MCF 10A (cell line): ENCODE measurements at regions of chr1 and their contacts with region 1.

Region 1: DNA sequence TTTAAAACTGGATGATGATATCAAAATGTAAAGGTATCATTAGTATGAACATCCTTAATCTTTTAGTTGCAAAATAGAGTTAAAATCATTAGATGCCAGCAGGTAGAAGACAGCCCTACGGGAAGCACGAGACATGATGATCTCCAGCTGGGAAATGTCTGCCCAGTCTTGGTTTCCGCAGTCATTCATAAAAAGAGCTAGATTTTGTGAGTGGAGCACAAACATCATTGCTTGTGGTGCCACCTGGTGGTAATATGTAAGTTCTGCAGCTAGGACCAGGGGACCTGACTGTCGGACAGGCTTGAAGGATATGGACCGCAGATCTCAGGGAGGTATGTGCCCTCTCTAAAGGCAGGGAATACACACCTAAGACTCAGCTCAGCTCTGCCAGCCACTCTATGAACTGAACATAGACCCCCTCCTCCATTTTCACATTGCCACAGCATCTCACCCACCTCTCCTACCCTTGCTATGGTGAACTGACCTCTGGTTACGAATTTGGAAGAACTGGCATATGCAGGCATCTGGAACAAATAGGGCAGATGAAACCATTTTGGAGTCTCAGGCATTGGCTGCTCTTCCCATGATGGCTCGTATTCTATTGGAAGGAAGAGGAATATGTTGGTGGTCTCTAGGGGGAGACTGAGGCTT is 9.2 kb downstream of the FCMR start:
- DNase-seq: peak; percentile 96
- H3K4me3 Mint-ChIP-seq: no peak overlapping the region
- H3K27ac Mint-ChIP-seq: no peak overlapping the region
- H3K4me1 Mint-ChIP-seq: peaks cover 28% of the 10 kb centered on the region
- H3K27me3 Mint-ChIP-seq: peaks cover 43% of the 10 kb centered on the region
- CTCF ChIP-seq: peak; percentile 94

Region 2: DNA sequence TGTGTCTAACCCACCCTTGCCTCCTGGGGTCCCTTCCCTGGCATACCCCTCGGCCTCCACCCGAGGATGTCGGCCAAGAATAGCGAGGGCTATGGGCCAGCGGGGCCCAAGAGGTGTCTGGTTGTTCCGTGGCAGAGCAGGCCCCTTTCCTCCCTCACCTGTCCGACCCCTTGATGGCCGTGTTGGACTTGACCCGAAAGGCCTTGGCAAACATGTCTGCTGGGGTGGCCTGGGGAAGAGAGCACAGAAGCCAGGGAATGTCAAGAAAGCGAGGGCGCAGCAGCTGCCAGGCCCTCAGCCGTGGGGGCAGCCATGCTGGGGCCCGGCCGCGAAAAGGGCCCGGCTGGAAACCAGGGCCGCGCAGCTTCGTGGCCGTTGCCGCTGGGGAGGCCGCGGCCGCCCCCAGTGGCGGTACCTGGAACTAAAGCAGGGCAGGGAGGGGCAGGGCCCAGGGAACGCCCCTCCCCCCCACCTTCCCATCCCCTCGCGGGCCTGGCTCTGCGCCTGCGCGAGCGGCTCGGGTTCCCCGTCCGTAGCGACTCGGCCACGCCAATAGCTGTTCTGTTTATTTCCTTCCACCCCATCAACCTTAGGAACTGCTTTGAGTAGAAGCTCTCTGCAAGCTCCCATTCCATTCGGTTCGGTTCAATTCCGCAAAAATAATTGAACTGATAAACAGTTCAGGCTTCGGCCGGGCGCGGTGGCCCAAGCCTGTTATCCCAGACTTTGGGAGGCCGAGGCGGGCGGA is 300.3 kb before region 1 on chr1 and contains the start of gene EIF2D:
- CTCF ChIA-PET with region 1: interaction called, 53 read pairs
- POLR2A ChIA-PET with region 1: interaction called, 11 read pairs
- intact Hi-C with region 1: loop called (anchors 1 kb)
- DNase-seq: peak; percentile 99
- H3K4me3 Mint-ChIP-seq: peak within 1 kb of the TSS; percentile 88
- H3K27ac Mint-ChIP-seq: peak within 1 kb of the TSS; percentile 97
- H3K4me1 Mint-ChIP-seq: peaks cover 21% of the 10 kb centered on the region
- H3K27me3 Mint-ChIP-seq: no peaks in the 10 kb centered on the region
- CTCF ChIP-seq: peak; percentile 100
- total RNA-seq, gene EIF2D: 110 and 116 TPM in 2 replicates

Region 3: GRCh38 chr1:206734499-206735142 is 177.9 kb before region 1 on chr1:
- CTCF ChIA-PET with region 1: interaction called, 297 read pairs
- POLR2A ChIA-PET with region 1: interaction called, 9 read pairs
- intact Hi-C with region 1: loop called (anchors 1 kb)
- DNase-seq: peak; percentile 73
- H3K4me3 Mint-ChIP-seq: no peak overlapping the region
- H3K27ac Mint-ChIP-seq: peak overlapping the region; percentile 6
- H3K4me1 Mint-ChIP-seq: peaks cover 9% of the 10 kb centered on the region
- H3K27me3 Mint-ChIP-seq: no peaks in the 10 kb centered on the region
- CTCF ChIP-seq: peak; percentile 97

Region 4: DNA sequence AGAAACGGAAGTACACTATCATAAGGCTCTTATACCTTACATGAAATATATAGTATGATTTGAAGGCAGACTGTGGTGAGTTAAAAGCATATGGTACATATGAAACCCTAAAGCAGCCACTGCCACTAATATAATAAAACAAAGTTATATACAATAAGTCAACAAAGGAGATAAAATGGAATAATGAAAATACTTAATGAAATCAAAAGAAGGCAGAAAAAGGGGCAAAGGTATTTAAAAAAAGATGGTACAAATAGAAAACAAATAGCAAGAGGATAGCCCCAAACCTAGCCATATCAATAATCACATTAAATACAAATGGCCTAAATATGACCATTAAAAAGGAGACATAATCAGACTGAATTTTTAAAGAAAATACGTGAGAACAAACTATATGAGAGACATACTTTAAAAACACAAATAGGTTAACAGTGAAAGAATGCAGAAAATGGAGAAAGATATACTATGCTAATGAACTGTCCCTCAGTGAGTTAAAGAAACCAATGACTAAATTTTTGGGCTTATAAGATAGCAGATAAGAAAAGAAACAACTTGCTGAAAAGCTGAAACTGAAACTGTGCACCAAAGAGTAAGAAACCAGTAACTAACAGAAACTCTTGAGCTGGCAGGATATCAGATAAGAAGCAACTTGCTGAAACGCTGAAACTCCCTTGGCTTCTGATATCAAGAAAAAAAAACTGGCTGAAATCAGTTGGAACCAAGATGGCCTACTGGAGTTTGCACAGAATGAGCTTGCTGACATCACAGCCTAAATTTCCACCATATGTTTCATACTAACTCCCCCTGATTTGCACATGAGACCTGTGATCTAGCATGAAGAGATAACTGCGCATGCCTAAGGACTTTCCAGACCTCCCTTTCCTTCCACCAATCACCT is 95.9 kb before region 1 on chr1:
- CTCF ChIA-PET with region 1: interaction called, 243 read pairs
- POLR2A ChIA-PET with region 1: interaction called, 25 read pairs
- intact Hi-C with region 1: no loop called
- DNase-seq: no peak
- H3K4me3 Mint-ChIP-seq: no peak overlapping the region
- H3K27ac Mint-ChIP-seq: no peak overlapping the region
- H3K4me1 Mint-ChIP-seq: no peaks in the 10 kb centered on the region
- H3K27me3 Mint-ChIP-seq: no peaks in the 10 kb centered on the region
- CTCF ChIP-seq: no peak

Region 5: GRCh38 chr1:206890690-206891089 is 21.9 kb before region 1 on chr1:
- CTCF ChIA-PET with region 1: interaction called, 72 read pairs
- POLR2A ChIA-PET with region 1: interaction called, 271 read pairs
- intact Hi-C with region 1: loop called (anchors 1 kb)
- DNase-seq: peak; percentile 96
- H3K4me3 Mint-ChIP-seq: peak overlapping the region; percentile 45
- H3K27ac Mint-ChIP-seq: peak overlapping the region; percentile 95
- H3K4me1 Mint-ChIP-seq: peaks cover 91% of the 10 kb centered on the region
- H3K27me3 Mint-ChIP-seq: no peaks in the 10 kb centered on the region
- CTCF ChIP-seq: no peak

Region 6: DNA sequence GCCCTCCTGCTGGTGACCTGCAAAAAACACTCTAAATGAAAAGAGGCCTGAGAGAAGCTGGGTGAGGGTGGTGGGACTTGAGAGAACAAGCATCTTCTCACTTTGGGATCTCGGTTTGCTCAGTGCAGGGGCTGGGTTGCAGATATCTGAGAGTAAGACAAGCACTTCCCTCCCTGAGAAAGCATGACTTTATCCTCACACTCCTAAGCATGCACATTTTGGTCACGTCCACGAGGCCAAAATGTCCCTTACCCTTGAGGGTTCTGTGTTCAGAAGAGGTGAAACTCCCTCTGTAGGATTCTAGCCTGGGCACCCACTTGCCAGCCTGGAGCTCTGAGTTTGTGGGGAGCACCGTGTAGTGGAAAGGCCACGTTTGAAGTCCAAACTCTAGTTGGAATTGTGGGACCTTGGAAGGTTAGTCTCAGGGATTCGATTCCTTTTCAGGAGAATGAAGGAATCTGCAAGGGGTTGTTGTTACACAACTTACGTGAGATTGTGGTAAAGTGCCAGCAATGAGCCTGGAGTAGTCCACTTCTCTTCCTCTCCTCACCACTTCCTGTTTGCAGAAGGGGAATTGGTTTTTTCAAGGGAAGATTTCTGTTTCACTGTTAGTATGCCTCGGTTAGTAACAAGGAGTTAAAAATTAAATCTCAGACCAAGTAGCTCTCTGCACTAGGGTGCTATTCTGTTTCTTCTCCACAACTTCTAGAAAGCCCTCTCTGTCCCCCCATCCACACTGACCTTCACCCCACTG is 54.7 kb after region 1 on chr1:
- CTCF ChIA-PET with region 1: interaction called, 26 read pairs
- POLR2A ChIA-PET with region 1: interaction called, 3 read pairs
- intact Hi-C with region 1: no loop called
- DNase-seq: peak; percentile 53
- H3K4me3 Mint-ChIP-seq: no peak overlapping the region
- H3K27ac Mint-ChIP-seq: no peak overlapping the region
- H3K4me1 Mint-ChIP-seq: peaks cover 11% of the 10 kb centered on the region
- H3K27me3 Mint-ChIP-seq: peaks cover 27% of the 10 kb centered on the region
- CTCF ChIP-seq: no peak

Region 7: DNA sequence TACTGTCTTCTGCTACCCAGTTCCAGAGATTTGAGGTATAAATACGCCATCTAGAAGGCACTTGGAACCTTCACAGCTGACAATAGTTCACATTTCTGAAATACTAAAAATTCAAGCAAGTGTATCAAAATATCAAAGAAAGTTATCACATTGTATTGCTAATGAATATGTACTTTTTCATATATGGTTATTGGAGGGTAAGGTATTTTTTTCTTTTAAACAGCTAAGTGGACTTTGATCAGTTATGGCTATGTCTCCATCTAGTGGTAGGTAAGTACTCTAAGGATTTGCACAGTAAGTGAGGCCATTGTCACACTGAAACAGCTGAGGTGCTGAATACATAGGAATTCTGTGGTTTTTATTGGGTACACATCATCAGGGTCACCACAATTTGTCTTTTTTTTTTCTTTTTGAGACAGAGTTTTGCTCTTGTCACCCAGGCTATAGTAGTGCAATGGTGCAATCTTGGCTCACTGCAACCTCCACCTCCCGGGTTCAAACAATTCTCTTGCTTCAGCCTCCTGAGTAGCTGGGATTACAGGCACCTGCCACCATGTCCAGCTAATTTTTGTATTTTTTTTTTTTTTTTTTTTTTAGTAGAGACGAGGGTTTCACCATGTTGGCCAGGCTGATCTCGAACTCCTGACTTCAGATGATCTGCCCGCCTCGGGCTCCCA is 492.4 kb after region 1 on chr1:
- CTCF ChIA-PET with region 1: no interaction called
- POLR2A ChIA-PET with region 1: no interaction called
- intact Hi-C with region 1: loop called (anchors 10 kb)
- DNase-seq: peak; percentile 83
- H3K4me3 Mint-ChIP-seq: no peak overlapping the region
- H3K27ac Mint-ChIP-seq: no peak overlapping the region
- H3K4me1 Mint-ChIP-seq: peaks cover 5% of the 10 kb centered on the region
- H3K27me3 Mint-ChIP-seq: no peaks in the 10 kb centered on the region
- CTCF ChIP-seq: peak; percentile 99

Region 8: GRCh38 chr1:207519505-207520404 is 607.2 kb after region 1 on chr1:
- CTCF ChIA-PET with region 1: no interaction called
- POLR2A ChIA-PET with region 1: no interaction called
- intact Hi-C with region 1: no loop called
- DNase-seq: no peak
- H3K4me3 Mint-ChIP-seq: no peak overlapping the region
- H3K27ac Mint-ChIP-seq: no peak overlapping the region
- H3K4me1 Mint-ChIP-seq: no peaks in the 10 kb centered on the region
- H3K27me3 Mint-ChIP-seq: peaks cover 45% of the 10 kb centered on the region
- CTCF ChIP-seq: no peak